ENCODE measurements at regions of chr11 and their contacts with region 1.

Region 1: GRCh38 chr11:47642099-47642855 is at the start of gene MTCH2:
- DNase-seq: peak; percentile 93 to 98
- ATAC-seq: peak; percentile 92 to 99 (median 93)
- H3K4me3 ChIP-seq: peak within 1 kb of the TSS; percentile 79
- H3K4me3 Mint-ChIP-seq: peak within 1 kb of the TSS; percentile 98
- H3K27ac ChIP-seq: peak within 1 kb of the TSS; percentile 91
- H3K27ac Mint-ChIP-seq: peak within 1 kb of the TSS; percentile 92 to 95
- H3K4me1 ChIP-seq: peaks cover 15% of the 10 kb centered on the region
- H3K4me1 Mint-ChIP-seq: peaks cover 12 to 19% of the 10 kb centered on the region in 2 donors
- H3K27me3 ChIP-seq: no peaks in the 10 kb centered on the region
- H3K27me3 Mint-ChIP-seq: no peaks in the 10 kb centered on the region
- CTCF ChIP-seq: no peak
- total RNA-seq, gene MTCH2: 25.0 to 32.4 (median 31.4) TPM

Region 2: DNA sequence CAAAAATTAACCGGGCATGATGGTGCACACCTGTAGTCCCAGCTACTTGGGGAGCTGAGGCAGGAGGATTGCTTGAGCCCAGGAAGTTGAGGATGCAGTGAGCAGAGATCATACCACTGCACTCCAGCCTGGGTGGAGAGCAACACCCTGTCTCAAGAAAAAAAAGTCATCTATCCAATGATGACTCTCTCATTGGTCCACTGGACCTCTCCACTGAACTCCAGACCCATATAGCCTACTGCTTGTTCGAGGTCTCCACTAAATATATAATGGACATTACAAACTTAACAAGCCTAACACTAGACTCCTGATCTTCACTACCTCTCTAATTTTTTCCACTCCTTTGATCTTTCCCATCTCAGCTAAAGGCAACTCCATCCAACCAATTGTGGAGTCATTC is 33.6 kb after region 1 on chr11:
- intact Hi-C with region 1: no loop called
- DNase-seq: no peak
- ATAC-seq: no peak
- H3K4me3 ChIP-seq: no peak overlapping the region
- H3K4me3 Mint-ChIP-seq: no peak overlapping the region
- H3K27ac ChIP-seq: no peak overlapping the region
- H3K27ac Mint-ChIP-seq: no peak overlapping the region
- H3K4me1 ChIP-seq: no peaks in the 10 kb centered on the region
- H3K4me1 Mint-ChIP-seq: no peaks in the 10 kb centered on the region
- H3K27me3 ChIP-seq: no peaks in the 10 kb centered on the region
- H3K27me3 Mint-ChIP-seq: no peaks in the 10 kb centered on the region
- CTCF ChIP-seq: no peak

Region 3: GRCh38 chr11:47715082-47715669 is 72.9 kb after region 1 on chr11 and contains the start of gene AGBL2:
- intact Hi-C with region 1: loop called (anchors 5 kb)
- DNase-seq: peak; percentile 79 to 89
- ATAC-seq: peak; percentile 97 to 98 (median 97)
- H3K4me3 ChIP-seq: peak within 1 kb of the TSS; percentile 84
- H3K4me3 Mint-ChIP-seq: peak within 1 kb of the TSS; percentile 93
- H3K27ac ChIP-seq: peak within 1 kb of the TSS; percentile 90
- H3K27ac Mint-ChIP-seq: peak within 1 kb of the TSS; percentile 92 to 97
- H3K4me1 ChIP-seq: peaks cover 12% of the 10 kb centered on the region
- H3K4me1 Mint-ChIP-seq: peaks cover 17 to 20% of the 10 kb centered on the region in 2 donors
- H3K27me3 ChIP-seq: no peaks in the 10 kb centered on the region
- H3K27me3 Mint-ChIP-seq: no peaks in the 10 kb centered on the region
- CTCF ChIP-seq: no peak
- total RNA-seq, gene AGBL2: 6.1 to 8.5 (median 8.2) TPM

Region 4: DNA sequence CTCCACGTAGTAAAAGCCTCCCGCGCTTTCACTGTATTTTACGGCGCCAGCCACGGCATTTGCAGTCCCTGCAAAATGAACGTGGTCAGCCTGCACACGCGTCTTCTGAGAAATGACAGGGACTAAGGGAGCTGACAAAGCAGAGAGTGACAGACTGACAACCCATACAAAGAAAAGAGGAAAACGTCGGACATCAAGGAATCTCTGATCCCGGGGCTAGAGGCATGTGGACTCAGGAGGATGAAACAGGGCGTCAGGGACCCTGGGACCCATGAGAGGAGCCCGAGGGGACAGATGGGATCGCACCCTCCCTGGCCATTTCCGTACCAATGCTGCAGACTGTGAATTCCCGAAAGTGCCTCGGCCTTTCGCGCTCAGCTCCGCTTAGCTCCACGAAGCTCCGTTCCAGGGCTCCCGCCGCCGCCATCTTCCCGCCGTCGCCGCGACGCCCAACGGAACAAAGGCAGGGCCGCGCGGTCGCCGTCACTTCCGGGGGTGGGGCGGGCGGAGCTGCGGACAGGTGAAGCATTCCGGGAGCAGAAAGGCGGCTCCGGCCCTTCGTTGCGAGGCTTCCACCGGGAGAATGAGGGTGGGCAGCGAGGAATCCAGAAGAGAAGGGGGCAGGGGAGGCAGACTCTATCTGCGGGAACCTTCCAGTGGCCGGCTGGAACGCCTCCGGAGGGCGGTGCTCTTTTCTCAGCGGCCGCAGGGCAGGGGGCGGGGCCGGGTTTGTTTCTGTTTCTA is 205.8 kb after region 1 on chr11 and contains the start of gene NUP160:
- intact Hi-C with region 1: loop called (anchors 5 kb)
- DNase-seq: peak; percentile 89 to 90
- ATAC-seq: peak; percentile 89 to 92 (median 90)
- H3K4me3 ChIP-seq: peak within 1 kb of the TSS; percentile 82
- H3K4me3 Mint-ChIP-seq: peak within 1 kb of the TSS; percentile 98
- H3K27ac ChIP-seq: peak within 1 kb of the TSS; percentile 87
- H3K27ac Mint-ChIP-seq: peak within 1 kb of the TSS; percentile 95
- H3K4me1 ChIP-seq: peaks cover 20% of the 10 kb centered on the region
- H3K4me1 Mint-ChIP-seq: peaks cover 23 to 25% of the 10 kb centered on the region in 2 donors
- H3K27me3 ChIP-seq: no peaks in the 10 kb centered on the region
- H3K27me3 Mint-ChIP-seq: no peaks in the 10 kb centered on the region
- CTCF ChIP-seq: no peak
- total RNA-seq, gene NUP160: 36.6 to 53.3 (median 43.5) TPM